ENCODE measurements at regions of chr11 and their contacts with region 1.

Region 1: GRCh38 chr11:20609727-20610707 is 10.6 kb downstream of the SLC6A5 start:
- DNase-seq: peak; percentile 76
- H3K4me3 Mint-ChIP-seq: peak overlapping the region; percentile 40
- H3K27ac Mint-ChIP-seq: no peak overlapping the region
- H3K4me1 Mint-ChIP-seq: peaks cover 7% of the 10 kb centered on the region
- H3K27me3 Mint-ChIP-seq: peaks cover 67% of the 10 kb centered on the region

Region 2: GRCh38 chr11:20387241-20388095 is 222.5 kb before region 1 on chr11 and contains the start of gene PRMT3:
- CTCF ChIA-PET with region 1: interaction called, 3 read pairs
- POLR2A ChIA-PET with region 1: no interaction called
- intact Hi-C with region 1: loop called (anchors 2 kb)
- DNase-seq: peak; percentile 98
- H3K4me3 Mint-ChIP-seq: peak within 1 kb of the TSS; percentile 96
- H3K27ac Mint-ChIP-seq: peak within 1 kb of the TSS; percentile 99
- H3K4me1 Mint-ChIP-seq: peaks cover 20% of the 10 kb centered on the region
- H3K27me3 Mint-ChIP-seq: no peaks in the 10 kb centered on the region
- total RNA-seq, gene PRMT3: 31.2 to 33.2 TPM

Region 3: DNA sequence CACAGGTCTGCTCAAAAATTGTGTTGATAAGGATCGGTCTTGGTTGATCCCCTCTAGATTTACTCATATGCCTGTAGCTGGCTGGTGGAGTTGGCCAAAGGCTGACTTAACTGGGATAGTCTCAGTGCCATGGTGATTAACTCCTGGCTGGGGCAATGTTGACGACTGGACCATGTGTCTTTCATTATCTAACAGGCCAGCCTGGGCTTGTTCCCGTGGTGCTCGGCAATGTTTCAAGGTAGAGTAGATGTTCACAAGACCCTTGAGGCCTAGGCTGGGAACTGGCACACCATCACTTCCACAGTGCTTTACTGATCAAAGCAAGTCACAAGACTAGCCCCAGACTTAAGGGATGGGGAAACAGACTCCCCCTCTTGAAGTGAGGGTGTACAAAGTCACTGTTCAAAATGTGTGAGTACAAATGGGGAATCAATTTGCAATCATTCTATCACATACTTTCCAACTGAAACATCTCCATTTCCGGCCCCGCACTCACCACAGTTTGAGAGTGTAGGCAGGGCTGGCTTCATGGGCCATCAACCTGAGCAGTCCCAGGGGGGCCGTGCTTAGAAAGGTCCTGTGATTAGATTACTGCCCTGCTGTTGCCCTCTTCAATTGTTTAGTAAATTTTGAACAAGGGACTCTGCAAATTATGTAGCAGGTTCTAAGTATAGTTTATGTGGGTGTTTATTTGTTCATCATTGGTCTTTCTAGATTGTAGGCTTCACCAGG is 300.1 kb after region 1 on chr11:
- CTCF ChIA-PET with region 1: no interaction called
- POLR2A ChIA-PET with region 1: no interaction called
- intact Hi-C with region 1: no loop called
- DNase-seq: no peak
- H3K4me3 Mint-ChIP-seq: no peak overlapping the region
- H3K27ac Mint-ChIP-seq: no peak overlapping the region
- H3K4me1 Mint-ChIP-seq: no peaks in the 10 kb centered on the region
- H3K27me3 Mint-ChIP-seq: no peaks in the 10 kb centered on the region

Measured in activated CD4-positive, alpha-beta memory T cell treated with anti-CD3 and anti-CD28 coated beads for 36 hours (primary cell).